Activated naive CD4-positive, alpha-beta T cell treated with anti-CD3 and anti-CD28 coated beads, Interleukin-2, amount 10 ng/mL, durations not matched to agents 7 days and 5 days (primary cell): ENCODE measurements at regions of chr1 and their contacts with region 1.

Region 1: GRCh38 chr1:39091845-39092645 is 65.9 kb downstream of the NDUFS5 start:
- DNase-seq: peak; percentile 76
- H3K4me3 Mint-ChIP-seq: no peak overlapping the region
- H3K27ac Mint-ChIP-seq: no peak overlapping the region
- H3K4me1 Mint-ChIP-seq: peaks cover 4% of the 10 kb centered on the region
- H3K27me3 Mint-ChIP-seq: peaks cover 28% of the 10 kb centered on the region

Region 2: GRCh38 chr1:38989979-38990378 is 102.1 kb before region 1 on chr1:
- CTCF ChIA-PET with region 1: interaction called, 11 read pairs
- DNase-seq: no peak
- H3K4me3 Mint-ChIP-seq: peak overlapping the region; percentile 85
- H3K27ac Mint-ChIP-seq: peak overlapping the region; percentile 82
- H3K4me1 Mint-ChIP-seq: peaks cover 40% of the 10 kb centered on the region
- H3K27me3 Mint-ChIP-seq: peaks cover 4% of the 10 kb centered on the region

Region 3: GRCh38 chr1:39081266-39082009 is 10.6 kb before region 1 on chr1:
- CTCF ChIA-PET with region 1: interaction called, 12 read pairs
- DNase-seq: peak; percentile 51
- H3K4me3 Mint-ChIP-seq: no peak overlapping the region
- H3K27ac Mint-ChIP-seq: no peak overlapping the region
- H3K4me1 Mint-ChIP-seq: peaks cover 8% of the 10 kb centered on the region
- H3K27me3 Mint-ChIP-seq: peaks cover 76% of the 10 kb centered on the region